ENCODE measurements at regions of chr2 and their contacts with region 1.

Region 1: GRCh38 chr2:105369747-105370690 is 28.8 kb downstream of the FHL2 start:
- DNase-seq: peak; percentile 86 to 90 (median 88)
- ATAC-seq: peak; percentile 91
- H3K4me3 ChIP-seq: no peak overlapping the region
- H3K27ac ChIP-seq: no peak overlapping the region
- H3K4me1 ChIP-seq: peaks cover 6% of the 10 kb centered on the region
- H3K27me3 ChIP-seq: no peaks in the 10 kb centered on the region
- CTCF ChIP-seq: peak; percentile 76 to 96 (median 94)
- POLR2A ChIP-seq: no peak

Region 2: DNA sequence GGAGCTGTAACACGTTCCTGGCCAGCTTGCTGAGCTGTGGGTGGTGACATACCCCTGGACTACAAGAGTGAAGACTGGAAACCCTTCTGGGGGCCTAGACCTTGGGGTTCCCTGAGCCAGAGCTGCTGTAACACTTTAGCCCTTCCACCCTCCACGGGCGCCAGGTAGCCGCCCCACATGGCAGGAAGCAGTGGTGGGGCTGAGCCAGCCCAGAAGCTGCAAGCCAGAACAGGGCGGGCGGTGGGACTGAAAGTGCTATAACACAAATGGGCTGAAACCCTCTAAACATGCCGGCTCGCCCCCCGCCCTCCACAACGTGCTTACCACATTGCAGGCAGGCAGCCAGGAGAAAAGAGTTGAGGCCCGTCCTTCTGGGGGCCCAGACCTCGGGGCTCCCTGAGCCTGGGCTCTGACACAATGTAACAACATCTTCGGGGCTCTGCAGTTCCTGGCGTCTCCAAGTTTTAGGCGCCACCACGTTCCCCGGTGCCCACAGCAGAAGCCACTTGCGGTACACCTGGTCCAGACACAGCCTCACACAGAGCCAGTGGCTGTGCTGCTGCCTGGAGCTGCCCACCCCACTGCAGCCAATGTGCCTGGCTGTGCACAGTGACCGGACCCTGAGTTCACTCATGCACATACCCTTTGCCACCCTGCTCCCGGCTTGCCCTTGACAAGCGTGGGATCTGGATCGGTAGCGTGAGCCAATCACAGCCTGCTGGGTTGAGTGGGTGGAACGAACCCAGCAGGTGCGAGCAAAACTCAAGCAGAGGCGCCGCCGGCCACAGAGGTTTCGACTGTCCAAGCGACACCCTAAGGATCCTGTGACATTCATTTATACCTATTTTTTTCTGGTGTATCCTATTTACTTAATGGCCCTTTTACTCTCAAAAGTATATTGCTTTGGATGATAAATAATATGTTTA is 156.2 kb after region 1 on chr2:
- intact Hi-C with region 1: loop called (anchors 5 kb)
- DNase-seq: no peak
- ATAC-seq: no peak
- H3K4me3 ChIP-seq: no peak overlapping the region
- H3K27ac ChIP-seq: no peak overlapping the region
- H3K4me1 ChIP-seq: no peaks in the 10 kb centered on the region
- H3K27me3 ChIP-seq: no peaks in the 10 kb centered on the region
- CTCF ChIP-seq: no peak
- POLR2A ChIP-seq: no peak